ENCODE measurements at regions of chr5 and their contacts with region 1.

Region 1: GRCh38 chr5:139787568-139788293 is 7.9 kb upstream of the PSD2 start:
- DNase-seq: peak; percentile 85 to 94
- H3K4me3 ChIP-seq: peak overlapping the region; percentile 43
- H3K4me3 Mint-ChIP-seq: peak overlapping the region; percentile 72
- H3K27ac Mint-ChIP-seq: no peak overlapping the region
- H3K4me1 ChIP-seq: no peaks in the 10 kb centered on the region
- H3K4me1 Mint-ChIP-seq: no peaks in the 10 kb centered on the region
- H3K27me3 ChIP-seq: no peaks in the 10 kb centered on the region; the same call in none of the 2 replicates
- H3K27me3 Mint-ChIP-seq: peaks cover 30% of the 10 kb centered on the region
- CTCF ChIP-seq: peak; percentile 94 to 98

Region 2: DNA sequence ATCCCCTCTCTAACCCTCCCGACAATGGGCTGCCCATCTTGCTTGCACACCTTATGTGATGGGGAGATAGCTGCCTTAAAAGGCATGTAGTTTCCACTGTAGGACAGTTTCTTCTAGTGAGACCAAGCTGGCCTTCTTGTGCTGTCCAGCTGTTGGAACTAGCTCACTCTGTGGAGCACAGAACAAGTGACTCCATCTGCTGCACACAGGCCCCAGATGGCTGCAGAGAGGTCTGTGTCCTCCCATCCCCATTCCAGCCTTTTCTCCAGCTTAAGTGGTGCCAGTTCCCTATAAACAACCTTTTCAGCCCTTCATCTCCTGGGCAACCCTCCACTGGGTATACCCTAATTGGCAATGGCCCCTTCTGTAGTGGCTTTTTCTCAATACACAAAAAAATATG is 10.9 kb before region 1 on chr5:
- CTCF ChIA-PET with region 1: interaction called, 11 read pairs
- POLR2A ChIA-PET with region 1: no interaction called
- intact Hi-C with region 1: no loop called
- DNase-seq: no peak
- H3K4me3 ChIP-seq: no peak overlapping the region
- H3K4me3 Mint-ChIP-seq: no peak overlapping the region
- H3K27ac Mint-ChIP-seq: no peak overlapping the region
- H3K4me1 ChIP-seq: no peaks in the 10 kb centered on the region
- H3K4me1 Mint-ChIP-seq: no peaks in the 10 kb centered on the region
- H3K27me3 ChIP-seq: no peaks in the 10 kb centered on the region
- H3K27me3 Mint-ChIP-seq: peaks cover 3% of the 10 kb centered on the region
- CTCF ChIP-seq: no peak

Region 3: GRCh38 chr5:139844472-139845145 is 56.9 kb after region 1 on chr5:
- CTCF ChIA-PET with region 1: interaction called, 11 read pairs
- POLR2A ChIA-PET with region 1: no interaction called
- intact Hi-C with region 1: loop called (anchors 1 kb)
- DNase-seq: peak; percentile 84 to 85
- H3K4me3 ChIP-seq: no peak overlapping the region
- H3K4me3 Mint-ChIP-seq: no peak overlapping the region
- H3K27ac Mint-ChIP-seq: no peak overlapping the region
- H3K4me1 ChIP-seq: no peaks in the 10 kb centered on the region
- H3K4me1 Mint-ChIP-seq: no peaks in the 10 kb centered on the region
- H3K27me3 ChIP-seq: 0 out of 2 replicates have a peak, but pooled peaks cover 1% of the 10 kb centered on the region
- H3K27me3 Mint-ChIP-seq: peaks cover 15% of the 10 kb centered on the region
- CTCF ChIP-seq: peak; percentile 67 to 92

Region 4: GRCh38 chr5:139968547-139969261 is 181.0 kb after region 1 on chr5:
- CTCF ChIA-PET with region 1: interaction called, 72 read pairs
- POLR2A ChIA-PET with region 1: no interaction called
- intact Hi-C with region 1: loop called (anchors 1 kb)
- DNase-seq: peak; percentile 88 to 95
- H3K4me3 ChIP-seq: no peak overlapping the region
- H3K4me3 Mint-ChIP-seq: no peak overlapping the region
- H3K27ac Mint-ChIP-seq: no peak overlapping the region
- H3K4me1 ChIP-seq: no peaks in the 10 kb centered on the region
- H3K4me1 Mint-ChIP-seq: no peaks in the 10 kb centered on the region
- H3K27me3 ChIP-seq: no peaks in the 10 kb centered on the region
- H3K27me3 Mint-ChIP-seq: peaks cover 3% of the 10 kb centered on the region
- CTCF ChIP-seq: peak; percentile 99 to 100